Panc1 (cell line): ENCODE measurements at regions of chr15 and their contacts with region 1.

Region 1: GRCh38 chr15:66907826-66908743 is 157.3 kb upstream of the SMAD3 start:
- DNase-seq: no peak
- ATAC-seq: peak; percentile 81
- H3K4me3 ChIP-seq: peak overlapping the region in 1 of 2 experiments; percentile 2; a peak in 1 of 4 replicates
- H3K27ac ChIP-seq: peak overlapping the region; percentile 85
- H3K4me1 ChIP-seq: peaks cover 28% of the 10 kb centered on the region
- H3K27me3 ChIP-seq: no peaks in the 10 kb centered on the region
- CTCF ChIP-seq: no peak

Region 2: GRCh38 chr15:67303490-67304363 is 395.6 kb after region 1 on chr15:
- CTCF ChIA-PET with region 1: interaction called, 10 read pairs
- POLR2A ChIA-PET with region 1: no interaction called
- in situ Hi-C with region 1: no loop called
- intact Hi-C with region 1: no loop called
- DNase-seq: peak; percentile 10
- ATAC-seq: peak; percentile 93
- H3K4me3 ChIP-seq: no peak overlapping the region
- H3K27ac ChIP-seq: peak overlapping the region; percentile 60; the same call in 1 of the 2 replicates
- H3K4me1 ChIP-seq: peaks cover 15% of the 10 kb centered on the region
- H3K27me3 ChIP-seq: no peaks in the 10 kb centered on the region
- CTCF ChIP-seq: peak; percentile 69